ENCODE measurements at regions of chr11 and their contacts with region 1.

Region 1: DNA sequence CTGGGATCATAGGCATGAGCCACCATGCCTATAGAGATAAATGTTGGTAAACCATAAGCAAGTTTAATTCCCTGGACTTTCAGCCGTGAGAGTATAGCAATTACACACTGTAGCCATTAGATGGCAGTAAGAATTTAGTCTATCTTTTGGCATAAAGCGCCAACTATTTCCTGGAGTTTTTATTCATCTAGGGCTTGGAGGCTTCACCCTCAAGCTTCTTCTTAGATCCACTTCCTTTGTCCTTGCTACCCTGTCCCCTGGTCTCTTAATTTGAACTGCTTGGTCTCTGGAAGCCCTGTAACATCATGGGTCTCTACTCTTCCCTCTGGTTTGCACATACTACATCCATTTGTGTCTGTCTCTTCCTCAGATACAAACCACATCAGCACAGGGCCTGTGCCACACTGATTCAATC is 38.2 kb downstream of the OR10A6 start:
- DNase-seq: no peak

Region 2: DNA sequence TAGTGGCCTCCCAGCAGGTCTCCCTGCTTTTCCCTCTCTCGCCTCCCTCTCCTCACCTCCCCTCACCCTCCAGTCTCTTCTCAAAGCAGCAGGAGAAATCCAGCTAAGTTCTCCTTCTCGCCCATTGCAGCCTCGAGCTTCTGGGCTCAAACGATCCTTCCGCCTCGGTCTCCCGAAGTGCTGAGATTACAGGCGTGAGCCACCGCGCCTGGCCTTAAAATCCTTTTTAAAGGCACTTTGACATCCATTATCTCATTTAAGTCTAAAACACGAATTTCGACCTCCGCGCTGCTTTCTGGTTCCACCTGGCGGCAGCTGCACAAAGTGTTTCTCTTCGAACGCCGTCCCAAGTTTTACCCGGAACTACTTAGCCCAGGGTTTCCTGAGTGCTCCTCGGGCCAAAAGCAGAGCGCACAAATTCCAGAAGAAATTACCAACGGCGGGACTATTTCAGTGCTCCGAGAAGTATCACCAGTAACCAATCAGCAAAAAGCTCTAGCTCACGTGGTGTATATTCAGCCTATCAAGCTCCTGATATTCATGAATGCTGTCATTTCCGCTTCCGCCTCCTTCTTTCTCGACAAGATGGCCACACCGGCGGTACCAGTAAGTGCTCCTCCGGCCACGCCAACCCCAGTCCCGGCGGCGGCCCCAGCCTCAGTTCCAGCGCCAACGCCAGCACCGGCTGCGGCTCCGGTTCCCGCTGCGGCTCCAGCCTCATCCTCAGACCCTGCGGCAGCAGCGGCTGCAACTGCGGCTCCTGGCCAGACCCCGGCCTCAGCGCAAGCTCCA is 94.1 kb after region 1 on chr11 and contains the start of gene EIF3F:
- intact Hi-C with region 1: loop called in 1 of 2 experiments (anchors 10 kb)
- DNase-seq: peak; percentile 95
- total RNA-seq, gene EIF3F: 138 to 139 TPM

Region 3: GRCh38 chr11:8328848-8329330 is 436.0 kb after region 1 on chr11:
- intact Hi-C with region 1: no loop called
- DNase-seq: peak; percentile 92

Measured in posterior vena cava (tissue), 2 donors.